Testis (tissue), 5 donors: ENCODE measurements at regions of chr6 and their contacts with region 1.

Region 1: DNA sequence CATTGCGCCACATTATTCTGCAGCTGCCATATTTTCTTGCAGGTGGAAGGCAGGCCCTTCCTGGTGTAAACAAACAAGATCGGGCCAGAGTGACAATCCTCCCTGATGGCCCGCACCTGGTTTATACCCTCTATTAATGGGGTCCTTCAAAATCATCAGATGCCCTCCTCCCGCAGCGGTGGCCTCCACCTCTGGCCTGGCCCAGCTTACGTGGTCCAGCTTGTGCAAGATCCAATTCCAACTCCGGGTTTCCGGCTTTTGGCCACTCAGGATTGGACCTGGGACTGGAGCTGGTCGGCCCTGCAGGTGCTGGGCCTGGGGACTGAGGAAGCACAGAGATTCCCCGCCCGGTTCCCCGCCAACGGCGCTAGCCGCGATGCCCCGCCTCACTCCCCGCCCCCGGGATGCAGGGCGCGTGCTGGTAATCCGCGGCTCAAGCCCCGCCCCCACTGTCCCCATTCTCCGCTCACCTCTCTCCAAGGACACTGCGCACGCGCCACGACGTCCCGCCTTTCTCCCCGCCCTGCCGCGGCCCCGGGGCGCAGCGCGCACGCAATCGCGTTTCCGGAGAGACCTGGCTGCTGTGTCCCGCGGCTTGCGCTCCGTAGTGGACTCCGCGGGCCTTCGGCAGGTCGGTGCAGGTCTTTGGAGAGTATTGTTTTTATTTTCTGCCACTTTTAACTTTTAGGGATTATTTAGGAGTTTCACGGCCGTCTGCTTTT is at the start of gene TMEM14B:
- DNase-seq: peak; percentile 99
- H3K4me3 ChIP-seq: peak within 1 kb of the TSS; percentile 69 to 90
- H3K27ac ChIP-seq: peak within 1 kb of the TSS; percentile 36 to 78
- H3K4me1 ChIP-seq: peaks cover 23% of the 10 kb centered on the region
- H3K27me3 ChIP-seq: no peaks in the 10 kb centered on the region
- CTCF ChIP-seq: no peak
- POLR2A ChIP-seq: no peak
- total RNA-seq, gene TMEM14B: 91.7 to 106 TPM

Region 2: GRCh38 chr6:10694302-10695085 is 52.9 kb before region 1 on chr6 and contains the starts of genes C6orf52 and PAK1IP1:
- intact Hi-C with region 1: loop called (anchors 5 kb)
- DNase-seq: peak; percentile 97
- H3K4me3 ChIP-seq: peak within 1 kb of the TSS; percentile 84 to 91
- H3K27ac ChIP-seq: peak within 1 kb of the TSS; percentile 94 to 96
- H3K4me1 ChIP-seq: peaks cover 7% of the 10 kb centered on the region
- H3K27me3 ChIP-seq: no peaks in the 10 kb centered on the region
- CTCF ChIP-seq: peak in 1 of 3 experiments; percentile 6
- POLR2A ChIP-seq: peak; percentile 27
- total RNA-seq, gene C6orf52: 7.9 to 14.3 TPM
- total RNA-seq, gene PAK1IP1: 11.0 to 12.5 TPM

Region 3: DNA sequence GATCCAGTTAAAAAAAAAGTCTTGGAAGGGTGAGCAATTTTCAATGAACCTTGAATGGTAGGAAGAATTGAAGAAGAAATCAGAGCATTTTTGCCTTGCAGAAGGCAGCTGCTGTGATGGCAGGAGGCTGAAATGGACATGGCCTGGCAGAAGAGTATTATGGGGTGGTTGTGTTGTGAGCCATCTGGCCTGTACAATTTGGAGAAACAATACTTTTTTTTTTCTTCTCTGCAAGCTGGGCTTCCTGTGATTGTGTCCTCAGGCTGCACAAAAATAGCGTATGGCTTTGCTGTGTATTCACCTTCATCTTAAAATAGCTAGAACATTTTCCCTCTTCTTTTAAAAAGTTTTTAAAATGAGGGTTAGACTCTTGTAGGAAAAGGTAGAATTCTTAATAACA is 160.8 kb after region 1 on chr6:
- intact Hi-C with region 1: no loop called
- DNase-seq: no peak
- H3K4me3 ChIP-seq: no peak overlapping the region
- H3K27ac ChIP-seq: no peak overlapping the region
- H3K4me1 ChIP-seq: no peaks in the 10 kb centered on the region
- H3K27me3 ChIP-seq: no peaks in the 10 kb centered on the region
- CTCF ChIP-seq: no peak
- POLR2A ChIP-seq: no peak